ENCODE measurements at regions of chr4 and their contacts with region 1.

Region 1: DNA sequence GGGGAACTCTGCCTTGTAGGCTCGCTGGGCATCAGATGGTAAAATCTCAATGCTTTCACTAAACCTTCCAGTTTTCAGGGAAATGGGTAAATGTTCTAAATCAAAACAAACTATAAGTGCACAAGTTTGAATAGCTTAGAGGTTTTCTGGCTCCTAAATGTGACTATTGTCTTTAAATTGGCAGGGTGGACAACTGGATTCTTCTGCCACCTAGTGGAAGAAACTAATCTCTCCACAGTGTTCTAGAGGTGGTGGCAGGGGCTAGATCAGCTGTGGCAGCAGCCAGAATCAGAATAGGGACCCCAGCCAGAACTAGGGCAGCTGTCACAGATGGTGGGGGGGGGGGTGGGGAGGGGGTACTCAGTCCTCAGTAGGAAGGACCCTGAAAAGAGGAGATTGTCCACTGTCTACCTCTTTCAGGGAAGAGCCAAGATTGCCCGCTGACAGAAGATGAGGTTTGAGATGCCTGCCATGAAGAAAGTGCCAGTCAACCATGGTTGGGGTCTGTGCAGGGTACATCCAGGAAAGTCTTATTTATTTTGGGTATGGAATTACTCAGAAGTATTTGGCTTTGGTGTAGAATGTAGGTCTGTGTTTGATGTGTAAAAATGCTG is 201.4 kb downstream of the CCNG2 start:
- DNase-seq: peak in 2 of 4 donors; percentile 23 to 47
- ATAC-seq: peak; percentile 78
- H3K4me3 ChIP-seq: no peak overlapping the region
- H3K27ac ChIP-seq: no peak overlapping the region
- H3K4me1 ChIP-seq: no peaks in the 10 kb centered on the region
- H3K27me3 ChIP-seq: no peaks in the 10 kb centered on the region
- CTCF ChIP-seq: peak; percentile 45 to 52

Region 2: GRCh38 chr4:77240469-77241066 is 117.9 kb before region 1 on chr4:
- intact Hi-C with region 1: loop called in 1 of 2 experiments (anchors 5 kb)
- DNase-seq: peak in 3 of 4 donors; percentile 36 to 68 (median 55)
- ATAC-seq: peak; percentile 97
- H3K4me3 ChIP-seq: no peak overlapping the region
- H3K27ac ChIP-seq: no peak overlapping the region
- H3K4me1 ChIP-seq: no peaks in the 10 kb centered on the region
- H3K27me3 ChIP-seq: peaks cover 0 to 4% of the 10 kb centered on the region in 2 donors
- CTCF ChIP-seq: peak; percentile 56 to 72

Region 3: DNA sequence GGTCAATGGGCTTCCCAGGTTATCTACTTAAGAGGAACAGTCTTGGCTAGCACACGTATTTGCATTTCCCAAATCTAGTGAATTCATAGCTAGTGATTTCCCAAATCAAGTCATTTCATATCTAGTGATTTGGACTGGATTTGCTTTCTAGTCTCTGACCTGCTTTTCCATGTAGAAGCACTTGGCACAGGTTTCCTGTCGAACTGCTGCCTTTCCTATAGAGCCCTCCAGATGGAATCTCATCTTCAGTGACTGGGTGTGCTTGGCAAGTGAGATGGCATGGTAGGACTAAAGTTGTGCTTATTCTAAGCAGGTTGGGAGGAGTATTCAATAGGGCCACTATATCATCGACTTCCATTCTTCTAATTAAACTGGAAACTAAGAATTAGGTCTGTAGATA is 106.7 kb before region 1 on chr4:
- intact Hi-C with region 1: no loop called
- DNase-seq: no peak
- ATAC-seq: no peak
- H3K4me3 ChIP-seq: no peak overlapping the region
- H3K27ac ChIP-seq: no peak overlapping the region
- H3K4me1 ChIP-seq: no peaks in the 10 kb centered on the region
- H3K27me3 ChIP-seq: no peaks in the 10 kb centered on the region
- CTCF ChIP-seq: no peak

Measured in left lung (tissue), 14 donors.